ENCODE measurements at regions of chr10 and their contacts with region 1.

Region 1: GRCh38 chr10:14751014-14751896 is 23.4 kb downstream of the FAM107B start:
- DNase-seq: peak; percentile 66 to 82 (median 68)
- ATAC-seq: peak; percentile 81 to 86 (median 82)
- H3K4me3 ChIP-seq: peak overlapping the region in 1 of 12 donors; percentile 5
- H3K27ac ChIP-seq: peak overlapping the region; percentile 66 to 91 (median 78)
- H3K4me1 ChIP-seq: peaks cover 0 to 54% (median 32%) of the 10 kb centered on the region in 12 donors
- H3K27me3 ChIP-seq: no peaks in the 10 kb centered on the region
- CTCF ChIP-seq: no peak
- POLR2A ChIP-seq: no peak

Region 2: GRCh38 chr10:14653271-14654228 is 97.7 kb before region 1 on chr10:
- intact Hi-C with region 1: loop called in 1 of 10 experiments (anchors 10 kb)
- DNase-seq: peak in 1 of 5 donors; percentile 12
- ATAC-seq: peak in 2 of 4 donors; percentile 36 to 73
- H3K4me3 ChIP-seq: no peak overlapping the region
- H3K27ac ChIP-seq: peak overlapping the region in 6 of 12 donors; percentile 6 to 74 (median 42)
- H3K4me1 ChIP-seq: peaks cover 0 to 50% (median 10%) of the 10 kb centered on the region in 12 donors
- H3K27me3 ChIP-seq: no peaks in the 10 kb centered on the region
- CTCF ChIP-seq: no peak
- POLR2A ChIP-seq: no peak

Region 3: DNA sequence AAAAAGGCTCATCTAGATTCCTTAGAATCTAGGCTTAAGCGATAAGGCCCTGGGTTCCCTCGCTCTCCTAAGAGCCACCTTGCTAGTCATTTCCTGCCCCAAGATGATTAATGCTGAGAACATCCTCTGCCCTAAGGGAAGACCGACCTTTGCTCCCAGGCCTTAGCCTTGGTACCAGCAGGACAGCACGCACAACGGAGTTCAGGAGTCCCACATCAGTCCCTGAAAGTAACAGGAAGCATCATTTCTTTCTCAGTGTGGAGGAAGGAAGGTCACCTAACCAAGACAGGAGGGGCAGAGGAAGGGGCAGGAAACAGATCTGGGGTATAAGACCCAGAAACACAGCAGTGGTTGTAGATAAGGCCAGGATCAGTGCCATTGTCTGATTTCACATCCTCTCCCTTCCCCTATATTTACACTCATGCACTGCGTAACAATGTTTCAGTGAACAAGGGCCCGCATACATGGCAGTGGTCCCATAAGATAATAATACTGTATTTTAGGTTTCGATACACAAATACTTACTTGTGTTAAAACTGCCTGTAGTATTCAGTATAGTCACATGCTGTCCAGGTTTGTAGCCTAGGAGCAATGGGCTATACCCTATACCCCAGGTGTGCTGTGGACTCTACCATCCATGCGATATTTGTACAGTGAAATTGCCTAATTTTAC is 31.6 kb after region 1 on chr10:
- intact Hi-C with region 1: no loop called
- DNase-seq: no peak
- ATAC-seq: peak in 3 of 4 donors; percentile 49 to 62 (median 58)
- H3K4me3 ChIP-seq: no peak overlapping the region
- H3K27ac ChIP-seq: no peak overlapping the region
- H3K4me1 ChIP-seq: peaks cover 0 to 10% (median 0%) of the 10 kb centered on the region in 12 donors
- H3K27me3 ChIP-seq: no peaks in the 10 kb centered on the region
- CTCF ChIP-seq: no peak
- POLR2A ChIP-seq: no peak